B cell (primary cell): ENCODE measurements at regions of chr13 and their contacts with region 1.

Region 1: GRCh38 chr13:109162248-109163053 is 533.0 kb downstream of the MYO16 start:
- DNase-seq: peak; percentile 86
- ATAC-seq: peak; percentile 93
- H3K4me3 ChIP-seq: no peak overlapping the region
- H3K4me3 Mint-ChIP-seq: peak overlapping the region; percentile 82
- H3K27ac ChIP-seq: peak overlapping the region in 1 of 2 donors; percentile 50
- H3K27ac Mint-ChIP-seq: peak overlapping the region; percentile 85
- H3K4me1 ChIP-seq: peaks cover 18 to 33% of the 10 kb centered on the region in 2 donors
- H3K4me1 Mint-ChIP-seq: peaks cover 37% of the 10 kb centered on the region
- H3K27me3 ChIP-seq: peaks cover 0 to 4% (median 2%) of the 10 kb centered on the region in 4 experiments
- H3K27me3 Mint-ChIP-seq: peaks cover 26% of the 10 kb centered on the region
- CTCF ChIP-seq: no peak

Region 2: DNA sequence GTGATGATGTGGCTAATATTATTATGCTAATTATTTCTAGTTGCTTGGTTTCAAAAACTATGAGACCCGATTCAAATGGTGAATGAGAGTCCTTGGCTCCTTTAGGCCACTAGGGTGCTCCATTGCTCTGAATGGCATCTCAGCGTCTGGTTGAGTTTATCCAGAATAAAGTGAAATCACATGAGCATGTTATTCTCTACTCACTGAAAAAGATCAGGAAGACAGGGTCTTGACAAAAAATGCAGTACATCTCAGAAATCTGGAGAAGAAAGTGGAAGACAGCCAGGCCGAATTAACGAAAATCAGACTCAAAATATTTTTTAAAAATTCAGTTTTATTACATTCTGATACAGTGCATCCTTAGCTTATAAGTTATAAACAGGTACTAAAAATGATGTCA is 16.8 kb before region 1 on chr13:
- CTCF ChIA-PET with region 1: interaction called, 5 read pairs
- POLR2A ChIA-PET with region 1: no interaction called
- intact Hi-C with region 1: loop called (anchors 2 kb)
- DNase-seq: peak; percentile 31
- ATAC-seq: peak; percentile 24
- H3K4me3 ChIP-seq: no peak overlapping the region
- H3K4me3 Mint-ChIP-seq: no peak overlapping the region
- H3K27ac ChIP-seq: no peak overlapping the region
- H3K27ac Mint-ChIP-seq: no peak overlapping the region
- H3K4me1 ChIP-seq: no peaks in the 10 kb centered on the region
- H3K4me1 Mint-ChIP-seq: no peaks in the 10 kb centered on the region
- H3K27me3 ChIP-seq: peaks cover 0 to 16% (median 8%) of the 10 kb centered on the region in 4 experiments
- H3K27me3 Mint-ChIP-seq: peaks cover 43% of the 10 kb centered on the region
- CTCF ChIP-seq: peak; percentile 67